Activated CD4-positive, alpha-beta T cell treated with anti-CD3 and anti-CD28 coated beads for 36 hours (primary cell): ENCODE measurements at regions of chr1 and their contacts with region 1.

Region 1: GRCh38 chr1:11681071-11681771 is at the start of gene MAD2L2:
- DNase-seq: peak; percentile 96
- ATAC-seq: peak; percentile 85
- H3K4me3 Mint-ChIP-seq: peak within 1 kb of the TSS; percentile 83
- H3K27ac Mint-ChIP-seq: peak within 1 kb of the TSS; percentile 88
- H3K4me1 Mint-ChIP-seq: peaks cover 9% of the 10 kb centered on the region
- H3K27me3 Mint-ChIP-seq: no peaks in the 10 kb centered on the region
- total RNA-seq, gene MAD2L2: 70.4 to 71.5 TPM

Region 2: DNA sequence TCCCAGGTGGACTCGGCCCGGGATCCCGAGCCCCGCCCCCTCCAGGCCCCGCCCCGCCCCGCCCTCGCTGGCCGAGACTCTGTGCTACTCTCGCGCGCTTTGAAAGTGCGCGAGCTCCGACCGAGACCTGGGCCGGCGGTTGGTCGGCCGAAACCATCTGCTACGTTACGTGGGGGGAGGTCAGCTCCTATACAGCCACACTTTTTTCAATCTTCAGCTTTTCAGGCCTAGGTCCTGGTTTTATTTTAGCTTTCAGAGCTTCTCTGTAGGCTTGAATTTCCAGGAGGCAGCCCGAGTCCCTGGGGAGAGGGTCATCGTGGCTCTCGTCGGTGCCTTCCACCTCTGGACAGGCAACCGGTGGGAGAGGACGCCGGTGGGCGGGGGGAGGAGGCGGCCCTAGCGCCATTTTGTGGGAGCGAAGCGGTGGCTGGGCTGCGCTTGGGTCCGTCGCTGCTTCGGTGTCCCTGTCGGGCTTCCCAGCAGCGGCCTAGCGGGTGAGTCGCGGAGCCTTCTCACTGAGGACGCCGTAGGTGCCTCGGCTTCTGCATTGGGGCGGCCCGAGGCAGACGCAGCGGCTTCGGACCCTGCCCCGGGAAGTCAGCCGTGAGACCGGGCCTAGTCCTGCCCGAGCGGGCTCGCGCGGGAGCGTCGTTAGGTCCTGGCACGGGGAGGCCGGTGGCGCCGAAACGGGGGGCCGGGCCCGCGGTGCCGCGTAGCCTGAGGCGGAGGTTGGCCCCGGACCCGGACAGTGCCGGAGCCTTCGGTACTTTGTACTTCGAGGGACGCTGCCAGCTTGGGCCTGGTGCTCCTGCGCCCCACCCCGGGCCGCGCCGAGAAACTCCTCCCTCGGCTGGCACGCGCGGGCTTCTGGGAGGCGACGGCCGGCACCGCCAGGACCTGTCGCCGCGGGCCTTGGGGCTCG is 668.7 kb before region 1 on chr1 and contains the start of gene TARDBP:
- CTCF ChIA-PET with region 1: no interaction called
- POLR2A ChIA-PET with region 1: no interaction called
- intact Hi-C with region 1: loop called in 1 of 2 experiments (anchors 1 kb)
- DNase-seq: peak; percentile 94
- ATAC-seq: peak; percentile 89
- H3K4me3 Mint-ChIP-seq: peak within 1 kb of the TSS; percentile 93
- H3K27ac Mint-ChIP-seq: peak within 1 kb of the TSS; percentile 99
- H3K4me1 Mint-ChIP-seq: peaks cover 30% of the 10 kb centered on the region
- H3K27me3 Mint-ChIP-seq: no peaks in the 10 kb centered on the region
- total RNA-seq, gene TARDBP: 180 to 190 TPM

Region 3: GRCh38 chr1:11099310-11100149 is 581.7 kb before region 1 on chr1 and contains the start of gene EXOSC10:
- CTCF ChIA-PET with region 1: no interaction called
- POLR2A ChIA-PET with region 1: no interaction called
- intact Hi-C with region 1: loop called in 1 of 2 experiments (anchors 1 kb)
- DNase-seq: peak; percentile 97
- ATAC-seq: peak; percentile 98
- H3K4me3 Mint-ChIP-seq: peak within 1 kb of the TSS; percentile 95
- H3K27ac Mint-ChIP-seq: peak within 1 kb of the TSS; percentile 92
- H3K4me1 Mint-ChIP-seq: peaks cover 11% of the 10 kb centered on the region
- H3K27me3 Mint-ChIP-seq: no peaks in the 10 kb centered on the region
- total RNA-seq, gene EXOSC10: 74.3 to 89.6 TPM

Region 4: DNA sequence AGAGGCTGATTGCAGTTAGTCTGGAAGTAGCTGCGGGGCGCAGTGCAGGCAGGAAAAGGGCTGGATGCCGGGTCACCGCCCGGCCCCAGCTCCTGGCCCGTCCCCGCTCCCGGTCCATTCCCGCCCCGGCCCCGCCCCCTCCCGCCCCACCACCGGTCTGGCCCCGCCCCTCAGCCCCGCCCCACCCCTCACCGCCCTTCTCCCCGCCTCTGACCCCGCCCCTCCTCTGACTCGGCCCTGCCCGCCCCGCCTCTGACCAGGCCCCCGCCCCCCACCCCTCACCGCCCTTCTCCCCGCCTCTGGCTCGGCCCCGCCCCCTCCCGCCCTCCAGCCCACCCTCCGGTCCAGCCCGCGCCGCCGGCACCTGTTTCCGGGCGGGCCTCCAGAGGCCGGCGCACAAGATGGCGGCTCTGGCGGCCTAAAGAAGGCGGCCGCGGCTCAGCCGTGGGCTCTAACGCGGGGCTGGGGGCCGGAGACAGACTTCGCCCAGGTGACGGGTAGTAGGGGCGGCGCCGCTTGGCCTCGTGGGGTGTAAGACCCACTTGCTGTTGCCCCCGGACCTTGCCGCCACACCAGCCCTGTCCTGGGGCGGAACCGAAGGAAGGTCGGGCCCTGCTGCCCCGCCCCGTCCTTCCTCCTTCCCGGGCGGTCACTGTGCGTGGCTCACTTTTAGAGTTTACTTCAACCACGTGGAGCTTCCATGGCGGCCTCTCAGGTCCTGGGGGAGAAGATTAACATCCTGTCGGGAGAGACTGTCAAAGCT is 408.2 kb before region 1 on chr1 and contains the start of gene UBIAD1:
- CTCF ChIA-PET with region 1: no interaction called
- POLR2A ChIA-PET with region 1: interaction called, 6 read pairs
- intact Hi-C with region 1: loop called in 1 of 2 experiments (anchors 1 kb)
- DNase-seq: peak; percentile 95
- ATAC-seq: peak; percentile 84
- H3K4me3 Mint-ChIP-seq: peak within 1 kb of the TSS; percentile 95
- H3K27ac Mint-ChIP-seq: peak within 1 kb of the TSS; percentile 91
- H3K4me1 Mint-ChIP-seq: peaks cover 29% of the 10 kb centered on the region
- H3K27me3 Mint-ChIP-seq: no peaks in the 10 kb centered on the region
- total RNA-seq, gene UBIAD1: 29.2 to 32.0 TPM

Region 5: DNA sequence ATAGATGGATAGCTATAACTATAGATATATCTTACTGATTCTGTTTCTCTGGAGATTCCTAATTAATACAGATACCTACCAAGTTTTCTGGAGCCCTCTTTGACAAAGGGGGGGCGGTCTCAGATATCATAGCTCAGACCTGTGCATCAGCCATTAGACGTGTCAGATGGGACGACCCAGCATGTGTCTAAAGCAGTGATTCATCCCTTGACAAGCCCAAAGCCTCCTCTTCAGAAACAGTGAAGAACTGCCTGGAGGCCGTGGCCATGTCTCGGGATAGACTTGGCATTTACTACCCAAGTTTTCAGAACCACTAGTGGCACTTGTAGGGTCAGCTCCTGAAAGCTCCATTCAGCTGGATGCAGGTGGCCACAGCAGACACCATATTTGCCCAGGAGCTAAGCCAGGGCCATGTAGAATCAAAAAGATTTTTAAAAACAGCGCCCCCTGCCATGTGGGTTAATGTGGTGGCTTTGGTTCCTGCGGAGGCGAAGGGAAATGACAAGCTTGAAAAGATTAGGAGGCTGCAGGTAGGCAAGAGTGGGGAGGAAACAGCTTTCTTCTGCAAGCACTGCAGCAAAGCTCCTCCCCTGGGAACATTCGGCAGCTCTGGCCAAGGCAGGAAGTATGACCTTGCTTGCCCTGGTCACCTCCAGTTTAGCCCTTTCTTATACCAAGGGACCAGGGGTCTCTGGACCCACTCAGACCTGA is 109.2 kb before region 1 on chr1:
- CTCF ChIA-PET with region 1: no interaction called
- POLR2A ChIA-PET with region 1: no interaction called
- intact Hi-C with region 1: no loop called
- DNase-seq: peak; percentile 59
- ATAC-seq: no peak
- H3K4me3 Mint-ChIP-seq: no peak overlapping the region
- H3K27ac Mint-ChIP-seq: no peak overlapping the region
- H3K4me1 Mint-ChIP-seq: no peaks in the 10 kb centered on the region
- H3K27me3 Mint-ChIP-seq: peaks cover 2% of the 10 kb centered on the region

Region 6: DNA sequence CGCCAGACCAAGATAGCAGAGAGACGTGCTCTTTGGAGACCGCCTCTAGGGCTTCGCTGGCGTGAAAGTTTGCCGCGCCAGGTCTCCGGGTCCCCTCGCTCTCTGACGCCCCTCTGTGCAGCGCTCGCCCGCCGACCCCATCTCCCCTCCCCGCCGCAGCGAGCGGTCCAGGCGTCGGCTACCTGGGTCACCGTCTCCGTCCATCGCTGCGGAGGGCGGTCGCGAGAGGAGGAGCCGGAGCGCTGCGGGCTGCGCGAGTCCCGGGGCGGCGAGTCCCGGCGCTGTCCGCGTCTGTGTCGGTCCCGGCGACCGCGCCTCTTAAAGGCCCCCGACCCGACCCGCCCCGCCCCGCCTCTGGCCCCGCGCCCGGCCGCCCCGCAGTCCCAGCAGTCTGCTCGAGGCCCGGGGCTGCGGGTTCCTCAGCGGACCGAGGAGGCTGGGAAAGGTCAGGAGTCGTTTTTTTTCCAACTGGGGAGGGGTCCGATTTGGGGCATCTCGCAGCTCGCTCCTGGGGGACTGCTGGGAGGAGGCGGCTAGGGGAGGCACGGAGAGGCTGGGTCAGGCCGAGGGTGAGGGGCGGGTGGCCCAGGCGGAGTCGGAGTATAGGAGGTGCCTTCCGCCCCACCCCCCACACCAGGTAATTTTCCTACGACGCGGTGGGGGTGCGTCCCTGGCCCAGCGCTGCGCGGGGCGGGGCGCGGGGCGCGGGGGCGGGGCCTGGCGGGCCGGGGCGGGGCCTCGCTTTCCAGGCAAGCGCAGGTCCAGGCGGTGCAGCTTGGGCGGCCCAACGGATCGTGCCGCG is 26.9 kb before region 1 on chr1 and contains the starts of genes FBXO2 and FBXO44:
- CTCF ChIA-PET with region 1: interaction called, 10 read pairs
- POLR2A ChIA-PET with region 1: no interaction called
- intact Hi-C with region 1: loop called in 1 of 2 experiments (anchors 1 kb)
- DNase-seq: peak; percentile 85
- ATAC-seq: peak; percentile 82
- H3K4me3 Mint-ChIP-seq: peak within 1 kb of the TSS; percentile 73
- H3K27ac Mint-ChIP-seq: no peak within 1 kb of the TSS
- H3K4me1 Mint-ChIP-seq: peaks cover 25% of the 10 kb centered on the region
- H3K27me3 Mint-ChIP-seq: no peaks in the 10 kb centered on the region
- total RNA-seq, gene FBXO2: 1.6 to 2.1 TPM
- total RNA-seq, gene FBXO44: 20.2 to 21.8 TPM

Region 7: GRCh38 chr1:11719313-11720032 is 38.3 kb after region 1 on chr1:
- CTCF ChIA-PET with region 1: interaction called, 12 read pairs
- POLR2A ChIA-PET with region 1: interaction called, 4 read pairs
- intact Hi-C with region 1: loop called in 1 of 2 experiments (anchors 1 kb)
- DNase-seq: peak; percentile 91
- ATAC-seq: peak; percentile 85
- H3K4me3 Mint-ChIP-seq: peak overlapping the region; percentile 70
- H3K27ac Mint-ChIP-seq: peak overlapping the region; percentile 71
- H3K4me1 Mint-ChIP-seq: peaks cover 13% of the 10 kb centered on the region
- H3K27me3 Mint-ChIP-seq: no peaks in the 10 kb centered on the region

Region 8: DNA sequence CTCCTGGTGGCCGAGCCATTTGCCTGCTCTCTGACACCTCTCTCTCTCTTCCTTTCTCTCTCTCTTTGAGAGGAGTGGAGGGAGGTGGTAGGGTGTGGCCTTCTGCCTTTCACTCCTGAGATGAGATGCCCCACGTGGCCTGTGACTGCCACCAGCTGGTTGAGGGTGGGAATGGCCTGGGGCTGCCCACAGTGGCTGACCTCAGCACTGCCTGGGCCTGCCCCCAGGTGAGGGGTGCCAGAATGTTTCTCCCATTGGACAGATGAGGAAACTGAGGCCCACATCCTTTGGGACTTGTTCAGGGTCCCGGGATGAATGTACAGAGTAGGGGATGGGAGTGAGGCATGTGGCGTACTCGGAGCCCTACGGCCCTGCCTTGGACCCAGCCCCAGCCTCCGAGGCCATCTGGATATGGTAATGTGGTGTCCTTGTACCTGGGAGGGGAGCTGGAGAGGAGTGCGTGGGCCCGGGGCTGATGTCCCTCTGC is 68.0 kb after region 1 on chr1:
- CTCF ChIA-PET with region 1: no interaction called
- POLR2A ChIA-PET with region 1: no interaction called
- intact Hi-C with region 1: loop called in 1 of 2 experiments (anchors 2 kb)
- DNase-seq: peak; percentile 84
- ATAC-seq: peak; percentile 98
- H3K4me3 Mint-ChIP-seq: no peak overlapping the region
- H3K27ac Mint-ChIP-seq: peak overlapping the region; percentile 74
- H3K4me1 Mint-ChIP-seq: peaks cover 6% of the 10 kb centered on the region
- H3K27me3 Mint-ChIP-seq: no peaks in the 10 kb centered on the region